ENCODE measurements at regions of chr20 and their contacts with region 1.

Region 1: GRCh38 chr20:3786665-3787323 is at the start of gene CENPB:
- DNase-seq: peak; percentile 84
- H3K4me3 Mint-ChIP-seq: peak within 1 kb of the TSS; percentile 76
- H3K27ac Mint-ChIP-seq: peak within 1 kb of the TSS; percentile 42
- H3K4me1 Mint-ChIP-seq: peaks cover 33% of the 10 kb centered on the region
- H3K27me3 Mint-ChIP-seq: no peaks in the 10 kb centered on the region
- CTCF ChIP-seq: peak; percentile 88
- total RNA-seq, gene CENPB: 51.5 and 54.8 TPM in 2 replicates

Region 2: DNA sequence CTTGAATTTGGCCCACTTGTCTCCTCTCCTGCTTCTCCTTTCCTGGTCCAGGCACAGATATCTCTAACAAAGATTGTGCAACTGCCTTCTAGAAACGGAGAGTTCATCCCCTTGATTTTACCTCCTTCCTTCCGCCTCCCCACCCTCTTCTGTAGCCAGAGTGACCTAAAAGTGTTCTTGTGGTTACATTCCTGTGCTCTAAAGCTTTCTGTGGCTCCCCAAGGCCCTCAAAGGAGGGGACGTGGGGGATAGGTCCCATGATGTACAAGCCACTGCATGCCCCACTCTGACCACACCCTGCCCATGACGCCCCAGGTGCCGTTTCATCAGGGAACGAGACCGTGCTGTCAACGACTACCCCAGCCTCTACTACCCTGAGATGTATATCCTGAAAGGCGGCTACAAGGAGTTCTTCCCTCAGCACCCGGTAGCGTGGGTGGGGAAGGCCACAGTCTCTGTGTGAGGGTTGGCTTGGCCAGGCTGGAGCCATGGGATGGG is 17.5 kb after region 1 on chr20:
- CTCF ChIA-PET with region 1: interaction called, 12 read pairs
- POLR2A ChIA-PET with region 1: interaction called, 8 read pairs
- intact Hi-C with region 1: no loop called
- DNase-seq: peak; percentile 86
- H3K4me3 Mint-ChIP-seq: peak overlapping the region; percentile 10
- H3K27ac Mint-ChIP-seq: peak overlapping the region; percentile 73
- H3K4me1 Mint-ChIP-seq: peaks cover 57% of the 10 kb centered on the region
- H3K27me3 Mint-ChIP-seq: no peaks in the 10 kb centered on the region
- CTCF ChIP-seq: no peak

Region 3: DNA sequence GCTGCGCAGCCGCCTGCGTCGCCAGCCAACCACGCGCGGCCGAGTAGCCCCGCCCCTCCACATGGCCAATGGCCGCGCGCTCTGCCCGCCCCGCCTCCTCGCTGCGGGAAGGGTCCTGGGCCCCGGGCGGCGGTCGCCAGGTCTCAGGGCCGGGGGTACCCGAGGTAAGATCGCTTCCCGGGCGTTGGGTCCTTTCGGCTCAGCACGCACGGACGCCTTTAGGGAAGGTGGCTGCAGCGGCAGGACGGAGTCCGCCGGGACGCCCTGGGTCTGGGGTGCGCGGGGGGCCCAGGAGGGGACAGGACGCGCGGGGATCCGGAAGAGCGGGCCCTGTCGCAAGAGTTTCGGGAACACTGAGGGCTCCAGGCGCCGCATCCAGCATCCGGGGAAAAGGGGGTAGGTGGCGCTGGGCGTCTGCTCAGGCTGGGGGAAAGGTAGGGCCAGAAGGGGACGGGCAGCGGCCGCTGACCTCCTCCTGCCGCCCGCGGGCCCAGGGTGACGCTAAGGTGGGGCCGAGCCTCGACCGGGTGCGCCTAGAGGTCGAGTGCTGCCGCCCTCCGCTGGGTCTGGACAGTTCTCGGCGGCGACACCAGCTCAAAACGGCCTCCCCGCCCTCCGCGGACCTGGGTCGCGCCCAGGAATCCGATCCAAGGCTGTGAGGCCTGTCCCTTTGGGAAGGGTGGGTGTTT is 60.1 kb after region 1 on chr20 and contains the start of gene MAVS:
- CTCF ChIA-PET with region 1: interaction called, 9 read pairs
- POLR2A ChIA-PET with region 1: interaction called, 21 read pairs
- intact Hi-C with region 1: no loop called
- DNase-seq: peak; percentile 86
- H3K4me3 Mint-ChIP-seq: peak within 1 kb of the TSS; percentile 83
- H3K27ac Mint-ChIP-seq: peak within 1 kb of the TSS; percentile 83
- H3K4me1 Mint-ChIP-seq: peaks cover 13% of the 10 kb centered on the region
- H3K27me3 Mint-ChIP-seq: no peaks in the 10 kb centered on the region
- CTCF ChIP-seq: no peak
- total RNA-seq, gene MAVS: 31.7 and 39.7 TPM in 2 replicates

Region 4: GRCh38 chr20:4076671-4077070 is 289.9 kb after region 1 on chr20:
- CTCF ChIA-PET with region 1: interaction called, 4 read pairs
- POLR2A ChIA-PET with region 1: no interaction called
- intact Hi-C with region 1: loop called (anchors 10 kb)
- DNase-seq: peak; percentile 78
- H3K4me3 Mint-ChIP-seq: no peak overlapping the region
- H3K27ac Mint-ChIP-seq: peak overlapping the region; percentile 44
- H3K4me1 Mint-ChIP-seq: peaks cover 28% of the 10 kb centered on the region
- H3K27me3 Mint-ChIP-seq: no peaks in the 10 kb centered on the region
- CTCF ChIP-seq: no peak

Measured in MCF 10A (cell line).